Esophagus muscularis mucosa (tissue), 4 donors: ENCODE measurements at regions of chr11 and their contacts with region 1.

Region 1: GRCh38 chr11:18721561-18722292 is 4.3 kb downstream of the IGSF22 start:
- DNase-seq: peak; percentile 93
- H3K4me3 ChIP-seq: peak overlapping the region; percentile 60 to 74 (median 68)
- H3K27ac ChIP-seq: peak overlapping the region; percentile 66 to 79 (median 72)
- H3K4me1 ChIP-seq: peaks cover 7 to 22% (median 19%) of the 10 kb centered on the region in 4 donors
- H3K27me3 ChIP-seq: no peaks in the 10 kb centered on the region
- CTCF ChIP-seq: peak; percentile 62 to 85 (median 67)
- EP300 ChIP-seq: no peak
- POLR2A ChIP-seq: no peak

Region 2: DNA sequence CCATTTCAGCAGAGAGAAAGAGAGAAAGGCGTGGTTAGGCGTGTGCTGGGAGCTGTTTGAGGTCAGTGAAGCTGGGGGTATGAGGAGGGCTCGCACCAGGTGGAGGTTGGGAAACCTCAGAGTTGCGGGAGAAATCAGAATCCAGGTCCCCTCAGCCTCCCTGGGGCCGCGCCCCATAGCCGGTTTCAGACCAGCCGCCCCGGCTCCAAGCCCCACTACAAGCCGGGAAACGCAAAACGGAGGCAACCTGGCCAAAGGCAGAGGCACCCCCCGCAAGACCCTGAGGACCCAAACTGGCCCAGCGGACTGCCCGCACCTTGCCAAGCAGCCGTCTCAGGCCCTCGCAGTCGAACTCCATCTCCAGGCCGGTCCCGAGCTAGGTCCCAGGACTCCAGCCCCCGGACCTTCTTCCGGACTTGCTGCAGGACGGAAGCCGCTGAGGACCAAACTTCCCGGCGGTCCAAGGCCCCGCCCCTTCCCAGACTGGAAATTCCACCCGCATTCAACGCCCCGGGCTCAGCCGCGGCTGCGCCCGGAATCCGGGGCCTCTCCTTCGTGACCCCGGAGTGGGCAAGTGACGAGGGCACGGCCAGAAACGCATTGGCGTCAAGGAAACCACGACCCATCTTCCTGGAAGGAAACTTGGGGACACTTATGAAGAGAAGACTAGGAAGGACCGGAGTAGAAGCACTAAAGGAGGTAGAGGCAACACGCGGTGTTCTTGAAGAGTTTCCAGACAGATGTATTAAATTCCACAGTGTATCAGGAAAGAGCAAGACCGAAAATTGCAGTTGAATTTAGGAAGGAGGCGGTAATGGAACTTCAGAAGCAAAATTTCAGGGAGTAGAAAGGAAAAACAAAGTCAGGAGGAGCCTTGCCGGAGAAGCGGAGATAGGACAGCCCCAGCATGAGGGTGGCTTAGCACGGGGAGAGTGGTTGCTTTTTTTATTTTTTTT is 133.2 kb before region 1 on chr11 and contains the start of gene UEVLD:
- intact Hi-C with region 1: loop called (anchors 5 kb)
- DNase-seq: peak; percentile 96
- H3K4me3 ChIP-seq: peak within 1 kb of the TSS; percentile 67 to 97 (median 86)
- H3K27ac ChIP-seq: peak within 1 kb of the TSS; percentile 78 to 91 (median 88)
- H3K4me1 ChIP-seq: peaks cover 28 to 47% (median 42%) of the 10 kb centered on the region in 4 donors
- H3K27me3 ChIP-seq: no peaks in the 10 kb centered on the region
- CTCF ChIP-seq: no peak
- EP300 ChIP-seq: peak; percentile 75
- POLR2A ChIP-seq: peak; percentile 62
- total RNA-seq, gene UEVLD: 28.7 to 39.1 (median 29.6) TPM